Left lung (tissue), 14 donors: ENCODE measurements at regions of chr20 and their contacts with region 1.

Region 1: GRCh38 chr20:59571551-59572314 is 32.6 kb upstream of the PHACTR3 start:
- DNase-seq: peak in 3 of 4 donors; percentile 59 to 79 (median 67)
- ATAC-seq: peak; percentile 93
- H3K4me3 ChIP-seq: peak overlapping the region in 1 of 2 donors; percentile 23
- H3K27ac ChIP-seq: peak overlapping the region in 1 of 2 donors; percentile 49
- H3K4me1 ChIP-seq: peaks cover 0 to 3% of the 10 kb centered on the region in 2 donors
- H3K27me3 ChIP-seq: peaks cover 5 to 71% of the 10 kb centered on the region in 2 donors
- CTCF ChIP-seq: peak; percentile 93 to 98

Region 2: DNA sequence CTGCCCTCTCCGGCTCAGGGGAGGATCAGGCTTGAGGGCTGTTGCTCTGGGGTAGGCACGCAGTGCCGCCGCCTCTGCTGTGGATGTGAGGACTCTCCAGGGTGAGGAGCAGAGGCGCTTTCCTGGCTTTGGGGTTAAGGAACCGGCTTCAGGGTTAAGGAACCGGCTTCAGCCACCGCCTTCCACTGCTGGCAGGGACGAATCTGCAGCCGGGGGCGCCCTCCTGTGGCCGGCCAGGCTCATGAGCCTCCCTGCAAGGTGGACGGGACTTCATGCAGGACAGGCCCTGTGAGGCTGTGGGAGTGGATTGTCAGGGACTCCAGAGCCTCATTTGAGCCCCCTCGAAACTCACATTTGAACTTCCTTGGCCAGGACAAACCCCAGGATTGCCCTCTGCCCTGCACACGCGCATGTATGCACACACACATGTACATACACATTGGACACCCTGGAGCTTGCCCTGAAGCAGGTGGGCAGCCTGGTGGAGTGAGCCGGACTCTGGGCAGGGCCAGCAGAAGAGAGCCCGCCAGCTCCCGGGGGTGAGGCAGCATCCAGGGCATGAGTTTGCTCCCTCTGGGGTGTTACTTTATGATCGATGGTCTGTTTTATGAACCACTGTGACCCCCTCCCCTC is 179.4 kb after region 1 on chr20:
- intact Hi-C with region 1: loop called in 1 of 2 experiments (anchors 10 kb)
- DNase-seq: peak; percentile 51 to 88 (median 68)
- ATAC-seq: peak; percentile 88
- H3K4me3 ChIP-seq: no peak overlapping the region
- H3K27ac ChIP-seq: no peak overlapping the region
- H3K4me1 ChIP-seq: peaks cover 4 to 15% of the 10 kb centered on the region in 2 donors
- H3K27me3 ChIP-seq: peaks cover 0 to 95% of the 10 kb centered on the region in 2 donors
- CTCF ChIP-seq: peak; percentile 50 to 70